Cardiac septum (tissue), 1 donor: ENCODE measurements at regions of chr3 and their contacts with region 1.

Region 1: GRCh38 chr3:170055209-170055608 is 17.4 kb downstream of the GPR160 start:
- DNase-seq: no peak

Region 2: DNA sequence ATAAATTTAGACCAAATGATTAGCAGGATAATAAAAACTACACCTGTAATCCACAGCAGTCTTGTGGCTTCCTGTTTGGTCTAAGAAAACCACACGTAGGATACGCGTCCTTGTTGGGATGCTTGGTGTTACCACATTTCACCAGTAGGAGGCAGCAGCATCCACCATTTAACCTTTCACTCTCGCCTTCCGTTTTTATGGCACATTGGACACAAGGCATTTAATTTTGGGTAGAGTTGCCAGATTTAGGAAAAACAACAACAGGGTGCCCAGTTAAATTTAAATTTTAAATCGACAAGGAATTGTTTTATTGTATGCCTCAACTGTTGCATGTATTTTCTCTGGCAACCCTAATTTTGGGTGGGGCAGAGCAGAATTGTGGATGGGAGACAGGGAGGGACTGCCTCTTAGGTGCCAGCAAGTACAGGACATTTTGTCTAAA is 191.7 kb before region 1 on chr3:
- intact Hi-C with region 1: loop called (anchors 10 kb)
- DNase-seq: no peak

Region 3: DNA sequence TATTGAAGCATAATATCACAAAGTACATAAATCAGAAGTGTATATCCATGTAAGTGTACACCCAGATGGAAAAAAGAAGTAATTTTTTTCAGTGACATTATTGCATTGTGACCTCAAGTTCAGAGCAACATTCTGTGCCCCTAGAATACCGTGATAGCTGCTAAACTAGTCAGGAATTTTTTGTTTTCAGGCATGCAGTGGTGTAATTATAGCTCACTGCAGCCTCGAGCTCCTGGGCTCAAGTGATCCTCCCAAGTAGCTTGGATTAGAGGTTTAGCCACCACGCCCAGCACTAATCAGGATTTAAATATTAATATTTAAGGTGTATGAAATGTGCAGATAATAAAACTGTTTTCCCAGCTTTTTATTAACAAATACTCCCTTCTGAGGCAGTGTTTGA is 63.0 kb before region 1 on chr3:
- intact Hi-C with region 1: no loop called
- DNase-seq: no peak